ENCODE measurements at regions of chr7 and their contacts with region 1.

Region 1: DNA sequence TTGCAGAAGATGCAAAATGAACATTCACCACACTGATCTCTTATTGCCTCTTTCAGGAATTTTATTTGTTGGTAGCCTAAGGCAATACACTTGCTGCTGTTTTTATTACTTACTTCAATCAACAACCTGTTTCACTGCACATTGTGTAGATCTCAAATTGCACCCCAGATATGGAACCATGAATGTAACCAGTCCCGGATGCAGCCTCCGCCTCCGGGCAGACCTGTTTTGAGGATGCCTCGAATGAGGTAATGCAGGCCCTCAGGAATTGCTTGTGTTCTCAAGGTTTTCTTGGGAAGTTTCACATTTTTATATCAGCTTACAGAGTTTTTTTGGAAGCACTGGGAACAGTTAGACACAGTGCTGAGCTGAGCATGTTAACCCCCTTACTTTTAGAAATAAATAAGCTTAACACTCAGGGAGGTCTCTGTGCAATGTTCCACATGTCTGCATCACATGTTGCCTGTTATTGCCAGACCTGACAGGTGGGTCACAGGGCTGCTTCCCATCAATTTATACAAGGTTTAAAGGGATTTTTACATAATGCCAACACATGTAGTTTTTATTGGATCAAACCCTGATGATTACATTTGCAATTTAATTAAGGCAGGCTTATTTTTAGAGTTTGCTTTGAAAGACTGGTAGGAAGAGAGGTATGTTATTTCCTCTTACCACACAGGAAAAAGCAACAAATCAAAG is 193.1 kb upstream of the POM121L12 start:
- DNase-seq: no peak

Region 2: GRCh38 chr7:52289247-52289646 is 553.1 kb before region 1 on chr7:
- intact Hi-C with region 1: loop called in 1 of 2 experiments (anchors 5 kb)
- DNase-seq: no peak